ENCODE measurements at regions of chr11 and their contacts with region 1.

Region 1: GRCh38 chr11:1652771-1653540 is 23.4 kb downstream of the KRTAP5-5 start:
- DNase-seq: peak; percentile 74 to 91
- H3K4me3 ChIP-seq: no peak overlapping the region
- H3K4me3 Mint-ChIP-seq: no peak overlapping the region
- H3K27ac Mint-ChIP-seq: peak overlapping the region; percentile 42
- H3K4me1 ChIP-seq: peaks cover 37% of the 10 kb centered on the region
- H3K4me1 Mint-ChIP-seq: peaks cover 17% of the 10 kb centered on the region
- H3K27me3 ChIP-seq: no peaks in the 10 kb centered on the region
- H3K27me3 Mint-ChIP-seq: no peaks in the 10 kb centered on the region
- CTCF ChIP-seq: peak; percentile 93 to 97

Region 2: GRCh38 chr11:1640076-1640946 is 12.6 kb before region 1 on chr11:
- CTCF ChIA-PET with region 1: interaction called, 27 read pairs
- POLR2A ChIA-PET with region 1: no interaction called
- intact Hi-C with region 1: no loop called
- DNase-seq: peak; percentile 14 to 72
- H3K4me3 ChIP-seq: no peak overlapping the region
- H3K4me3 Mint-ChIP-seq: no peak overlapping the region
- H3K27ac Mint-ChIP-seq: no peak overlapping the region
- H3K4me1 ChIP-seq: no peaks in the 10 kb centered on the region
- H3K4me1 Mint-ChIP-seq: no peaks in the 10 kb centered on the region
- H3K27me3 ChIP-seq: no peaks in the 10 kb centered on the region
- H3K27me3 Mint-ChIP-seq: peaks cover 8% of the 10 kb centered on the region
- CTCF ChIP-seq: peak; percentile 81 to 91

Region 3: GRCh38 chr11:1827095-1827813 is 174.3 kb after region 1 on chr11:
- CTCF ChIA-PET with region 1: interaction called, 67 read pairs
- POLR2A ChIA-PET with region 1: interaction called, 3 read pairs
- intact Hi-C with region 1: loop called (anchors 2 kb)
- DNase-seq: peak in 1 of 2 experiments; percentile 33
- H3K4me3 ChIP-seq: no peak overlapping the region
- H3K4me3 Mint-ChIP-seq: no peak overlapping the region
- H3K27ac Mint-ChIP-seq: peak overlapping the region; percentile 87
- H3K4me1 ChIP-seq: peaks cover 66% of the 10 kb centered on the region
- H3K4me1 Mint-ChIP-seq: peaks cover 39% of the 10 kb centered on the region
- H3K27me3 ChIP-seq: no peaks in the 10 kb centered on the region
- H3K27me3 Mint-ChIP-seq: no peaks in the 10 kb centered on the region
- CTCF ChIP-seq: no peak

Region 4: DNA sequence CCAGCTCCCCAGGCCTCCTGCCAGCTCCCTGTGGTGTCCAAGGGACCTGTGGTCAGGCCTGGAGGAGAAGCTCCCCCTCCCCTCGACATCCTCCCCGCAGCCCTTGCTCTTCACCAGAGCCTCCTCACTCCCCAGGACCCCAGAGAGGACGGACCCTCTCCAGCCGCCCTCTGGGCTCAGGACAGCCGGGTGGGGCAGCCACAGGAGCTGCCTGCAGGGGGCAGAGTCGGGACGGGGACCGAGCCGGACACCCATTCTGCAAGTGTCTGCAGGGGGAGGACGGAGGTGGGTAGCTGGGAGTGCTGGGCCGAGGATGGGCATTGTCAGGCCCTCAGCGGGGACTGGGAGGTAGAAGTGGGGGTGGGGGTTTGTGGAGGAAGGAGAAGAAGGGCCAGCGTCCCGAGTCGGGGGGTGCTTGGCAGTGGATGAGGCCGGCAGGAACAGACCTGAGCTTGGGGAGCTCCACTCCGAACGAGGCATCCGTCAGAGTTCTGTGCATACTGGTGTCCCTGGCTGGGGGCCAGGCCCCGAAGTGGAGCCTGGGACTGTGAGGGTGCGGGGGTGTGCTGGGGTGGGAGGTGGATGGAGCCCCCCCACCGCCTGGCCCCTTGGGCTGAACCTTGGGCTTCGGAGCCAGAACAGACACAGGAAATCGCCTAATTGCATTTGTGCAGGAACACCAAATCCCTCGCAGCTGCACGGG is 223.6 kb after region 1 on chr11:
- CTCF ChIA-PET with region 1: interaction called, 11 read pairs
- POLR2A ChIA-PET with region 1: no interaction called
- intact Hi-C with region 1: no loop called
- DNase-seq: peak in 1 of 2 experiments; percentile 63
- H3K4me3 ChIP-seq: no peak overlapping the region
- H3K4me3 Mint-ChIP-seq: no peak overlapping the region
- H3K27ac Mint-ChIP-seq: no peak overlapping the region
- H3K4me1 ChIP-seq: peaks cover 7% of the 10 kb centered on the region
- H3K4me1 Mint-ChIP-seq: no peaks in the 10 kb centered on the region
- H3K27me3 ChIP-seq: no peaks in the 10 kb centered on the region
- H3K27me3 Mint-ChIP-seq: no peaks in the 10 kb centered on the region
- CTCF ChIP-seq: peak; percentile 61 to 63

Region 5: GRCh38 chr11:1917671-1918516 is 264.9 kb after region 1 on chr11:
- CTCF ChIA-PET with region 1: interaction called, 4 read pairs
- POLR2A ChIA-PET with region 1: no interaction called
- intact Hi-C with region 1: loop called (anchors 2 kb)
- DNase-seq: no peak
- H3K4me3 ChIP-seq: no peak overlapping the region
- H3K4me3 Mint-ChIP-seq: no peak overlapping the region
- H3K27ac Mint-ChIP-seq: no peak overlapping the region
- H3K4me1 ChIP-seq: no peaks in the 10 kb centered on the region
- H3K4me1 Mint-ChIP-seq: no peaks in the 10 kb centered on the region
- H3K27me3 ChIP-seq: no peaks in the 10 kb centered on the region
- H3K27me3 Mint-ChIP-seq: no peaks in the 10 kb centered on the region
- CTCF ChIP-seq: peak; percentile 49 to 52

Region 6: DNA sequence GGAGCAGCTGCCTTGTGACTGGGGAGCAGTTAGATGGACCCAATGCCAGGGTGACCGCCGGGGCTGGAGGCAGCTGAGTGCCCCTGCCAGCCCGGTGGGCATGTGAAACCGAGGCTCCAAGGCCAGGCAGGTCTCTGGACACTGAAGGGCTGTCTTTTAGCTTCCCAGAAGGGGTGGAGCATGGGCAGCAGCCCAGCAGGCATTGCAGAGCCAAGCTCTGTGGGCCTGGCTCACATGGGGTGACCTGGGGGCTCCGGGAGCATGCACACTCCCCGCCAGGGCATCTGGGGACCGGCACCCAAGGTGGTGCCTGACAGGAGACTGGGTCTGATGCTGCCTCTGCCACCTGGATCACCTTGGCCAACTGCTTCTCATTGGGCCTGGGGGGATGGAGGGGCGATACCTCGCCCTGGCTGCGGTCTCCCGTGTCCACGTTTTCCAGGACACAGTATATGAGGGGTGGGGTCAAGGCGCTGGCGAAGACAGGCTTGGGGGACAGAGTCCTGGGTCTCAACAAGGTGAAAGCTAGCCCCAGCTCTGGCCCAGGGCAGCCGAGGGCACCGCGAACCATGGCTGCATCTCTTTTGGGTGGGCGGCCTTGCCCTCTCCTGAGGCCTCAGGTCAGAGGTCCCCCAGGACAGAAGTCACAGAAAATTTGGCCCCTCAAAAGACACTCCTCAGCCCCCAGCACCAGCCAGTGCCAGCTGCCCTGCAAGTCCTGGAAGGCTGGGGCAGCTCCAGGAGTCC is 504.5 kb after region 1 on chr11:
- CTCF ChIA-PET with region 1: interaction called, 188 read pairs
- POLR2A ChIA-PET with region 1: no interaction called
- intact Hi-C with region 1: no loop called
- DNase-seq: no peak
- H3K4me3 ChIP-seq: no peak overlapping the region
- H3K4me3 Mint-ChIP-seq: no peak overlapping the region
- H3K27ac Mint-ChIP-seq: no peak overlapping the region
- H3K4me1 ChIP-seq: no peaks in the 10 kb centered on the region
- H3K4me1 Mint-ChIP-seq: no peaks in the 10 kb centered on the region
- H3K27me3 ChIP-seq: no peaks in the 10 kb centered on the region
- H3K27me3 Mint-ChIP-seq: no peaks in the 10 kb centered on the region
- CTCF ChIP-seq: no peak